Posterior cingulate gyrus (tissue), 11 donors: ENCODE measurements at regions of chrX and their contacts with region 1.

Region 1: DNA sequence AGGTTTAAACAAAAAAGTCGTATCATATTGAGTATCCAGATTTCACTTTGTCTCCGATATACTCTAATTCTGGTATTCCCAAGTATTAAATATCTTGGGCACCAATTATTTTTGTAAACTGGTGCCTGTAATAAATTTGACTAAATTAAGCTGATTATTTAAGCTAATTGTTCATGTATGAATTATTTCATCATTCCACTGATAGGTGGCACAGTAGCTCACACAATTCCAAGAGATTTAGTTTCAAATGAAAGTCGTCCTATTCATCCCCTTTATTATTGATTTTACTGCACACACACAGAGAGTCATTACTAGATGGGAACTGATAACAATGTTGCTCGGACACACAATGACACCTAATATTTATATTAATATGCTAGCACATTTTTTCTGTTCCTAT is 432.4 kb downstream of the DMD start:
- DNase-seq: no peak

Region 2: DNA sequence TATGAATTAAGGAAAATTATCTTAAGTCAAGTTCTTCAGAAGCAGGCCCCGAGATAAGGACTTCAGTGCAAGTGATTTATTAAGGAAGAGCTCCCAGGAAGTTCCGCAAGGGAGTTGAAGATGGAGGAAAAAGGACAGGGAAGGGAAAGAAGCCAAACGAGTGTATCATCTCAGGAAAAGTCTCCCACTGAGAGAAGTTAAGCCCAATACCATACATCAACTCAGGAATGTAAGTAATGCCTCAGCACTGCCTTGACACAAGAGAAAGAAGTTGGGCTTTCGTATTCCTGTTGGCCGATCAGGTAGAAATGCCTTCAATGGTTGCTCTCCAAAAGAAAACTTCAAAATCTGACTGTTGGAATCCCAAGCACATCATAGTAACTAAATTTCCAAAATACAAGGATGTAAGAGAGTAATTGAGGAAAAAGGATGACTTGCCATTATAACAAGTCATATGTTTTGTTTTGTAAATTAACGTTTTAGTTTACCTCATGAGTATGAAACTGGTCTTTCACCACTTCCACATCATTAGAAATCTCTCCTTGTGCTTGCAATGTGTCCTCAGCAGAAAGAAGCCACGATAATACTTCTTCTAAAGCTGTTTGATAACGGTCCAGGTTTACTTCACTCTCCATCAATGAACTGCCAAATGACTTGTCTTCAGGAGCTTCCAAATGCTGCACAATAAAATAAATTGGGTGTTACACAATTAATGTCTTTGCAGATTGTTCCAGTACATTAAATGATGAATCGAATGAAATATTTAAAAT is 134.3 kb before region 1 on chrX:
- intact Hi-C with region 1: no loop called
- DNase-seq: no peak

Region 3: DNA sequence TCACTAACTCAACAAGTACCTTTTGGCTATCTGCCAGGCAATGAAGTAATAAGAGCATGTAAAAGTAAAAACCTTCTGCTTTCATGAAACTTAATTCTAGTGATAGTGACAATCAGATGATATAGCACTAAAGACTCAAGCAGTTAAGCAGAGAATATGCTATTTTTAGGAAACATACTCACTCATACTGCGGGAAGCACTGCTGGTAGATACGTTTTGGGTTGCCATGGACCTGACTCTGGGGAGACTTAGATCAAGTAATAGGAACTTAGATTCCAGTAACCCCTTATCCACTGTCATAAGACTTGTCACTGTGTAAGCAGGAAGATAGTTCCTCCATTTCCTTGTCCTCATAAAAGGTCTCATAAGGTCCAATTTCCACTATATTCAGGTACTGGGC is 46.0 kb after region 1 on chrX:
- intact Hi-C with region 1: no loop called
- DNase-seq: no peak

Region 4: DNA sequence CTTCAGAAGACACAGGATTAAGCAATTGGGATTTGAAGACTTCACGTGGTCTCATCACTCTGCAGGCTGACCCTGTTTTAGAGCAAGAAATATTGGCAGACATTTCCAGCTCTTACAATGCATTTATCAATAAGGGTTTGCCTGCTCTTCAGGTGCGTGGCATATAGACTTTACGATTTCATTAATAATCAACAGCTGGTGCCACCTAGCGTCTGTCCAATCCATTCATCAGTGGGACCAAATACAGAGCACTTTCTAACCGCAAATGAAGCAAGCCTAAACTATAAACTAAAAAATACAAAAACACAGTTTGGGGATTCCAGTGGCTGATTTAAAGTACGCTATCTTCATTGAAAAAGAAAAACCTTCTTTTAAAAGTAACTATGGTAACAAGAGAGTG is 557.8 kb after region 1 on chrX:
- intact Hi-C with region 1: loop called (anchors 5 kb)
- DNase-seq: peak in 2 of 10 donors; percentile 12 to 29